ENCODE measurements at regions of chr10 and their contacts with region 1.

Region 1: DNA sequence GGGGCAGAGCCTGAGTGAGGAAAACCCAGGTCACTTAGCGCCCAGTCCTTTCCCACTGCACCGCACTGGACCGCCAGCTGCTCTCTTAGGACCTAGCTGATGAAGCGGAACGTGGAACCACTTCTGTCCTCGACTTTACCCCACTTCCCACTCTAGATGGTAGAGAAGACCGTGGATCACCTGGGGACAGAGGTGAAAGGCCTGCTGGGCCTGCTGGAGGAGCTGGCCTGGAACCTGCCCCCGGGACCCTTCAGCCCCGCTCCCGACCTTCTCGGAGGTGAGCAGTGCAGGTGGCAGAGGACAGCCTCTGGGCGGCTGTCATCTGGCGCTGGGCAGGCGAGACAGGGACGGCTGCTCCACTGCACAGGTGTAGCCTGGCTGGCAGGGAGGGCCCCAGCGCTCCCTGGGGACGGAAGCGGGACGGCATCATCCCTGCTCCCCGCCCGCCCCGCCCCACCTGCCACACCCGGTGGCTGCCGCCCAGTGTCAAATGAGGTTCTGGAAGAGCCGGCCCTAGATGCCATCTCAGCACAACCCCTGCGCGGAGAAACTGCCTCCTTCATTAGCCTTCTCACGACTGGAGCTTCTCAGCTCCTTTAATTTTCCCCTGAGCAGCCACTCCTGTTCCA is 11.7 kb downstream of the PLAC9 start:
- DNase-seq: peak; percentile 45
- ATAC-seq: peak; percentile 65
- H3K4me3 Mint-ChIP-seq: peak overlapping the region; percentile 68
- H3K27ac Mint-ChIP-seq: peak overlapping the region; percentile 65
- H3K4me1 Mint-ChIP-seq: peaks cover 21% of the 10 kb centered on the region
- H3K27me3 Mint-ChIP-seq: peaks cover 6% of the 10 kb centered on the region

Region 2: GRCh38 chr10:80118674-80119073 is 25.5 kb before region 1 on chr10:
- CTCF ChIA-PET with region 1: interaction called, 12 read pairs
- DNase-seq: no peak
- ATAC-seq: no peak
- H3K4me3 Mint-ChIP-seq: no peak overlapping the region
- H3K27ac Mint-ChIP-seq: no peak overlapping the region
- H3K4me1 Mint-ChIP-seq: no peaks in the 10 kb centered on the region
- H3K27me3 Mint-ChIP-seq: peaks cover 28% of the 10 kb centered on the region

Region 3: DNA sequence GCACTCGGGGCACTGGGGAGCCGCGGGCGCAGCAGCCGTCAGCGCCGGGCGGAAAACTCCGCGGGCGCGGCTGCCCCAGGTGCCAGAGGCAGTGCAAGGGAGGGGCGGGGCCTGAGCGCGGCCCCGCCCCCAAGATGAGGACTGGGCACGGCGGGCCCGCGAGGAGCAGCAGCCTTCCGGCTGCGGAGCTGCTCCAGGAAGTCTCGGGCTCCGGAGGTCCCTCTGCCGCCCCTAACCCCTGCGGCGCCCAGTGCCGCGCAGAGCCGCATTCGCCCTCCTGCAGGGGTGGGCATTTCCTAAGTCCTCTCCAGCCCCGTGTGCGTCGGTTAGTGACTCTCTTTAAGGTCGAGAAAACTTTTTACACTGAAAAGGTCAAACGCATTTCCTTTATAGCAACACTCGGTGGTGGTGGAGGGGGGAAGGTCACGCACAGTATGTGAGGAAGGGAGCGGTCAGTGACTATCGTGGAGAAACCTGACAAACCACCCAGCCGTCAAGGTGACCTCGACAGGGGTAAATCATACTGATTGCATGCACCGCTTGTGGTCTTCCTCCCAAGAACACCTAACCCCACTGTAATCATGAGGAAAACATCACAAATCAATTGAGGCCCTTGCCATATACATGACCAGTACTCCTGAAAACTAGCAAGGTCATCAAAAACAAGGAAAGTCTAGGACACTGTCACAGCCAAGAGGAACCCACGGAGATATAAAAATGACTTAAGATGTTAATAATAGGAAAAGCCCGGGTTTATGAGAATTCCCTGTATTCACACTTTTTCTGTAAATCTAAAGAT is 61.5 kb after region 1 on chr10 and contains the start of gene ANXA11:
- CTCF ChIA-PET with region 1: interaction called, 14 read pairs
- DNase-seq: peak; percentile 89
- ATAC-seq: peak; percentile 85
- H3K4me3 Mint-ChIP-seq: peak within 1 kb of the TSS; percentile 97
- H3K27ac Mint-ChIP-seq: peak within 1 kb of the TSS; percentile 93
- H3K4me1 Mint-ChIP-seq: peaks cover 40% of the 10 kb centered on the region
- H3K27me3 Mint-ChIP-seq: no peaks in the 10 kb centered on the region
- total RNA-seq, gene ANXA11: 251 to 288 TPM

Region 4: DNA sequence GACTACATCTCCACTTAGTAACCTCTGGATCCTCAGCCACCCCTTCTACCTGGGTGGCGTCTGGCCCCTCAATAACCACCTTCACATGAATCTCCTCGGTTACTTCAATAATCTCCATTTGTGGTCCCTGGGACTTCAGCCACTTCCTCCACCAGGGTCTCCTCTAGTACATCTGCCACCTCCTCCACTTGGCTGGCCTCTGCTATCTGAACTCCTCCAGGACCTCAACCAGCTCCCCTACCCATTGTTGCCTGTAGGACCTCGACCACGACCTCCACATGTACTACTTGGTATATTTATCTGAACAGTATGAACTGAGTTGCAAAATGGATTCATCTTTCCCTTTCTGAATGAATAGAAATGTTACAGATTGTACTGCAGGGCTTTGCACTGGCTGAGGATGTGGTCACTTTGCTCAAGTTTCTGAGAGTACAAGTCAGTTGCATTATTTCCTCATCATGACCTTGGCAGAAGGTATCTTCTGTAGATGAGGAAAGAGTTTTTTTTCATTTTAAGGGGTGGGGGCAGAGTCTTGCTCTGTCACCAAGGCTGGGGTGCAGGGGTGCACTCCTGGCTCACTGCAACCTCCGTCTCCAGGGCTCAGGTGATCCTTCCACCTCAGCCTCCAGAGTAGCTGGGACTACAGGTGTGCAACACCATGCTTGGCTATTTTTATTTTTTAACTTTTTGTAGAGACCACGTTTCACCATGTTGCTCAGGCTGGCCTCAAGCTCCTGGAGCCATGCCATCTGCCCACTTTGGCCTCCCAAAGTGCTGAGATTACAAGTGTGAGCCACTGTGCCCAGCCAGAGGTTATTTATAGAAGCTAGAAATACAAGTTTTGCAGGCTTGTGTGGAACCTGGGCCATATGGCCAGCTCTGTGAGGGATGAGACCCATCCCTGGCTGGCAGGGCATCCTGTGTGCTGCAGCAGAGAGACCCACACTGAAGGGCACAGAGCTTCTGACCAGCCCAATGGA is 109.4 kb after region 1 on chr10:
- CTCF ChIA-PET with region 1: interaction called, 43 read pairs
- DNase-seq: peak; percentile 76
- ATAC-seq: peak; percentile 87
- H3K4me3 Mint-ChIP-seq: peak overlapping the region; percentile 8
- H3K27ac Mint-ChIP-seq: peak overlapping the region; percentile 99
- H3K4me1 Mint-ChIP-seq: peaks cover 26% of the 10 kb centered on the region
- H3K27me3 Mint-ChIP-seq: no peaks in the 10 kb centered on the region

Measured in activated CD8-positive, alpha-beta memory T cell treated with anti-CD3 and anti-CD28 coated beads, Interleukin-2, amount 10 ng/mL, durations not matched to agents 7 days and 5 days (primary cell).